Panc1 (cell line): ENCODE measurements at regions of chr3 and their contacts with region 1.

Region 1: GRCh38 chr3:11060500-11061251 is 68.1 kb downstream of the SLC6A1 start:
- DNase-seq: no peak
- ATAC-seq: peak; percentile 93
- H3K4me3 ChIP-seq: peak overlapping the region; percentile 43 to 65
- H3K27ac ChIP-seq: no peak overlapping the region
- H3K4me1 ChIP-seq: no peaks in the 10 kb centered on the region
- H3K27me3 ChIP-seq: no peaks in the 10 kb centered on the region; the same call in 1 of the 2 replicates
- CTCF ChIP-seq: peak; percentile 89

Region 2: GRCh38 chr3:10758304-10759061 is 302.2 kb before region 1 on chr3:
- CTCF ChIA-PET with region 1: interaction called, 10 read pairs
- POLR2A ChIA-PET with region 1: no interaction called
- in situ Hi-C with region 1: no loop called
- intact Hi-C with region 1: loop called (anchors 1 kb)
- DNase-seq: peak; percentile 38
- ATAC-seq: peak; percentile 94
- H3K4me3 ChIP-seq: no peak overlapping the region
- H3K27ac ChIP-seq: no peak overlapping the region
- H3K4me1 ChIP-seq: no peaks in the 10 kb centered on the region
- H3K27me3 ChIP-seq: peaks cover 3% of the 10 kb centered on the region; the same call in 1 of the 2 replicates
- CTCF ChIP-seq: peak; percentile 68

Region 3: GRCh38 chr3:10945683-10946287 is 114.9 kb before region 1 on chr3:
- CTCF ChIA-PET with region 1: interaction called, 3 read pairs
- POLR2A ChIA-PET with region 1: no interaction called
- in situ Hi-C with region 1: no loop called
- intact Hi-C with region 1: loop called (anchors 5 kb)
- DNase-seq: no peak
- ATAC-seq: peak; percentile 91
- H3K4me3 ChIP-seq: no peak overlapping the region
- H3K27ac ChIP-seq: no peak overlapping the region
- H3K4me1 ChIP-seq: no peaks in the 10 kb centered on the region
- H3K27me3 ChIP-seq: no peaks in the 10 kb centered on the region
- CTCF ChIP-seq: peak; percentile 87

Region 4: GRCh38 chr3:11195721-11196332 is 135.2 kb after region 1 on chr3:
- CTCF ChIA-PET with region 1: no interaction called
- POLR2A ChIA-PET with region 1: no interaction called
- in situ Hi-C with region 1: no loop called
- intact Hi-C with region 1: loop called (anchors 10 kb)
- DNase-seq: no peak
- ATAC-seq: peak; percentile 83
- H3K4me3 ChIP-seq: peak overlapping the region; percentile 8 to 43; a peak in 3 of 4 replicates
- H3K27ac ChIP-seq: peak overlapping the region; percentile 77
- H3K4me1 ChIP-seq: peaks cover 25% of the 10 kb centered on the region
- H3K27me3 ChIP-seq: no peaks in the 10 kb centered on the region
- CTCF ChIP-seq: no peak

Region 5: GRCh38 chr3:11335056-11335608 is 274.5 kb after region 1 on chr3:
- CTCF ChIA-PET with region 1: interaction called, 5 read pairs
- POLR2A ChIA-PET with region 1: no interaction called
- in situ Hi-C with region 1: no loop called
- intact Hi-C with region 1: loop called (anchors 10 kb)
- DNase-seq: peak; percentile 39
- ATAC-seq: peak; percentile 80
- H3K4me3 ChIP-seq: no peak overlapping the region
- H3K27ac ChIP-seq: no peak overlapping the region
- H3K4me1 ChIP-seq: no peaks in the 10 kb centered on the region
- H3K27me3 ChIP-seq: no peaks in the 10 kb centered on the region
- CTCF ChIP-seq: peak; percentile 66

Region 6: DNA sequence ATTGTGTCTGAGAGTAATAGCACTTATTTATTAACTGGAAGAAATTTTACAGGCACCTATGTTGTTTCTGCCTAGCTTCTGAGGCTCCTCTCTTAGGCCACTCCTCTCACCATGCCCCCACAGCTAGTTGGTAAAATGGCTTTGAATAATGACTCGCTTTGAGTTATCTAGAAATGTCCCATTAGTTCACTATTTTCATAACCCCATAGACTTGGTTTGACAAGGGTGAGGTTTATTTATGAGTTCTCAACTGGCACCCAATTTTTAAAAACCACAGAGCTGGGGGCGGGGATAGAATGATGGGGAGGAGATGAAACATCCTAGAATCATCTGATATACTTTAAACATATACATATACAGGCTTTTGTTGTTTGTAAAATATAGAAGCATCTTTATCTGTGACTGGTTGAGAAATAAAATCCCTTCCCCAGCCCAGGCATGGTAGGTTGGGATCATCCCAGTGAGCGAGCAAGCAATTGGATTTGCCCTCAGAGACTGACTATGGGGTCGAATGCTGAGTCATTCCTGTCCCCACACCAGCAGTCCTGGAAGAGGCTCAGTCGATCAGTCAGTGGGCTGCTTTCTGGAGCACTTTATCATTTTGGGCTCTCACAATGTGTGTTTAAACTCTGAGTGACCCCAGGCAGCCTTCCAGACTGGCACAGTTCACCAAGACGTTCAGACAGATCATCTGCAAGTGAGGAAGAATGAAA is 1363.4 kb after region 1 on chr3:
- CTCF ChIA-PET with region 1: no interaction called
- POLR2A ChIA-PET with region 1: no interaction called
- in situ Hi-C with region 1: no loop called
- intact Hi-C with region 1: no loop called
- DNase-seq: no peak
- ATAC-seq: peak; percentile 36
- H3K4me3 ChIP-seq: no peak overlapping the region
- H3K27ac ChIP-seq: peak overlapping the region; percentile 85
- H3K4me1 ChIP-seq: peaks cover 42% of the 10 kb centered on the region
- H3K27me3 ChIP-seq: no peaks in the 10 kb centered on the region
- CTCF ChIP-seq: no peak